ENCODE measurements at regions of chr1 and their contacts with region 1.

Region 1: GRCh38 chr1:65531972-65532570 is 111.6 kb downstream of the LEPR start:
- DNase-seq: no peak
- H3K4me3 ChIP-seq: no peak overlapping the region
- H3K27ac ChIP-seq: no peak overlapping the region
- H3K4me1 ChIP-seq: no peaks in the 10 kb centered on the region
- H3K27me3 ChIP-seq: no peaks in the 10 kb centered on the region
- CTCF ChIP-seq: no peak
- POLR2A ChIP-seq: no peak

Region 2: GRCh38 chr1:65027666-65028358 is 504.3 kb before region 1 on chr1:
- intact Hi-C with region 1: no loop called
- DNase-seq: peak; percentile 78 to 85
- H3K4me3 ChIP-seq: no peak overlapping the region
- H3K27ac ChIP-seq: no peak overlapping the region
- H3K4me1 ChIP-seq: peaks cover 0 to 21% of the 10 kb centered on the region in 2 donors
- H3K27me3 ChIP-seq: no peaks in the 10 kb centered on the region
- CTCF ChIP-seq: no peak
- POLR2A ChIP-seq: no peak

Region 3: DNA sequence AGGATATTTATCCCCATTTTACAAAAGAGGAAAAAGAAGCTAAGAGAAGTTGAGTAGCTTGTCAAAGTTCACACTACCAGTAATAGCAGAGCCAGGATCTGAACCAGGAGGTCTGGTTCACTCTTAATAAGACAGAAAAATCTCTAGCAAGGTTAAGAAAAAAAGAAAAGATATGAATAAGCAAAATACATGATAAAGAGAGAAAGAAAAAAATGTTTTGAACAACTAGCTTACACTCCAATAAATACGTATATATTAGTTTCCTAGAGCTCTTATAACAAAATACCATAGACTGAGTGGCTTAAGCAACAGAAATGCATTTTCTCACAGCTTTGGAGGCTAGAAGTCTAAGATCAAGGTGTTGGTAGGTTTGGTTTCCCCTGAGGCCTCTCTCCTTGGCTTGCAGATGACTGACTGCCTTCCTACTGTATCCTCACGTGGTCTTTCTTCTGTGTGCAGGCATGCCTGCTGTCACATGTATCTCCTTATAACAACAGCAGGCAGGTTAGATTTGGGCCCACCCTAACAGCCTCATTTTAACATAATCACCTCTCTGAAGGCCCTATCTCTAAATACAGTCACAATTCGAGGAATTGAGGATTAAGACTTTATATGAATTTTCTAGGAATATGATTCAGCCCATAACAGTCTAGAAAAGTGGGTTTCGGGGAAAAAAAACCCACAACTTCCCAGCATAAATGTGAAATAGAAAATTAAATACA is 51.2 kb before region 1 on chr1:
- intact Hi-C with region 1: loop called (anchors 2 kb)
- DNase-seq: no peak
- H3K4me3 ChIP-seq: no peak overlapping the region
- H3K27ac ChIP-seq: no peak overlapping the region
- H3K4me1 ChIP-seq: no peaks in the 10 kb centered on the region
- H3K27me3 ChIP-seq: no peaks in the 10 kb centered on the region
- CTCF ChIP-seq: no peak
- POLR2A ChIP-seq: no peak

Region 4: DNA sequence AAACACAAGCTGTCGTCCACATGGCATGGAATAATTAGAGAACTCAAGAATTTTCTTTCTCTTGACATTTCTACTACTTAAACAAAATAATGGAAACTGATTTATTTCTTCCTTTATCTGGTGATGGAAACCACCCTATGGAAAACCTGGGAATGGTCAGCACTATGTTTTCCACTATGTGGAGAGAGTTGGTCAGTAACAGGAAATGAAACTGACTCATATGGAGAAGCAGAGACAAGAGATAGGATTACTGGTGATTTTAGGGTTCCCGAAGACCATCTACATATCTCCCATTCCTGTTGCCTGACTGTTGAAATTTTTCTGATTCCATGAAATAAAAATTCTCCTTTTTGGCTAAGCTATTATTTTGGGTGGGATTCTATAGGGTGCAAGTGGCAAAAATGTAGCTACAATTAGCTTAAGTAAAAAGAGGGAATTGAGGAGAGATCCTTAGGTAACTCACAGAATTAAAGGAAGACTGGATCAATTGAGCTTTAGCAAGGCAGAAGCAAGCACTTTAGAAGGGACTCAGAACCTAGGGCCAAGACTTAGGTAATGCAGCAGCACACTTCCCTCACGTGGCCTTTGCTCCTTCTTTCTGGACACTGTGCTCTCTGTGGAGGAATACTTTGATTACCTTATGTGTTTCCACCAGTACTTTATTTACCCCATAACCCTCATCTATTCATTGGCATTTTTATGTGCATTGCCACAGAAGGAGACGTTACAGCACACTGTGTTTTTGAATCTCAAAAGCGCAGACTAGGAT is 22.0 kb before region 1 on chr1:
- intact Hi-C with region 1: no loop called
- DNase-seq: no peak
- H3K4me3 ChIP-seq: no peak overlapping the region
- H3K27ac ChIP-seq: no peak overlapping the region
- H3K4me1 ChIP-seq: no peaks in the 10 kb centered on the region
- H3K27me3 ChIP-seq: no peaks in the 10 kb centered on the region
- CTCF ChIP-seq: no peak
- POLR2A ChIP-seq: no peak

Region 5: GRCh38 chr1:65825741-65826140 is 293.7 kb after region 1 on chr1:
- intact Hi-C with region 1: no loop called
- DNase-seq: no peak
- H3K4me3 ChIP-seq: no peak overlapping the region
- H3K27ac ChIP-seq: no peak overlapping the region
- H3K4me1 ChIP-seq: no peaks in the 10 kb centered on the region
- H3K27me3 ChIP-seq: no peaks in the 10 kb centered on the region
- CTCF ChIP-seq: no peak
- POLR2A ChIP-seq: no peak

Measured in breast epithelium (tissue), 4 donors.